PC-9 (cell line): ENCODE measurements at regions of chr12 and their contacts with region 1.

Region 1: GRCh38 chr12:104137913-104138796 is at the start of gene NFYB:
- DNase-seq: peak; percentile 92 to 93
- H3K4me3 ChIP-seq: peak within 1 kb of the TSS; percentile 78
- H3K27ac ChIP-seq: peak within 1 kb of the TSS; percentile 15; the same call in 1 of the 2 replicates
- H3K4me1 ChIP-seq: peaks cover 26% of the 10 kb centered on the region
- H3K27me3 ChIP-seq: no peaks in the 10 kb centered on the region
- CTCF ChIP-seq: no peak
- total RNA-seq, gene NFYB: 30.6 and 36.7 TPM in 2 replicates

Region 2: DNA sequence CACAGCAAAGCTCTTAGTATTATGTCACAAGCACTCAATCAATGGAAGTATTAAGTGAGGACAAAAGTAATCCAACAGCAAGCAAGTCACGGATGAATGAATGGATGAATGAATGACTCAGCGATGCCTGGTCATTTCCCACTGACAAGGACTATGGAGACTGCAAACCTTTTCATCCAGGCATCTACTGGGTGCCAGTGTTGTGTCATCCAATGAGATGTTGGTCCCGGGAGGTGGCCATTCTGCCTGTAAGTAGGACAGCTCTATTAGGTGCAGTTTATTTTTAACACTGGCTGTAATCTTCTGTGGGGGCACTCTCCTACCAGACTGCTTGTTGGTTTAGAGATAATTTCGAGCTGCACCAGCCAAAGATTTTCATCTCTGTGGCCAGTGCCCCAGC is 511.7 kb before region 1 on chr12:
- CTCF ChIA-PET with region 1: no interaction called
- POLR2A ChIA-PET with region 1: no interaction called
- intact Hi-C with region 1: no loop called
- DNase-seq: no peak
- H3K4me3 ChIP-seq: no peak overlapping the region
- H3K27ac ChIP-seq: no peak overlapping the region
- H3K4me1 ChIP-seq: no peaks in the 10 kb centered on the region
- H3K27me3 ChIP-seq: peaks cover 5% of the 10 kb centered on the region; the same call in 1 of the 2 replicates
- CTCF ChIP-seq: no peak

Region 3: DNA sequence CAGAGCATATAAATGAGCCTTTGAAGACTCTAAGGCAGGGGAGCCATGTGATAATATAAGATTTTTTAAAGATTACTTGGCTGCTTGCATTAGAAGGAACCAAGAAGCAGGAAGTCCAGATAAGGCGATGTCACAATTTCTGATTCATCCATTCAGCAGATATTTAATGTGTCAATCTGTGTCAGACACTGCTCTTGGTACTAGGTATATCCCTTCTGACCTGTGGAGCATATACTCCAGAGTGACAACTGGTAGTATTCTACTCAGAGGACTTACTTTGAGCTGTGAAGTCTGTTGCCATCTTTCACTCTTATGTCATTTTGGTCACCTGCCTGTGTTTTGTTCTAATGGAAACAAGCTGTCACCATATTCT is 176.1 kb after region 1 on chr12:
- CTCF ChIA-PET with region 1: no interaction called
- POLR2A ChIA-PET with region 1: no interaction called
- intact Hi-C with region 1: loop called (anchors 10 kb)
- DNase-seq: peak in 1 of 2 experiments; percentile 79
- H3K4me3 ChIP-seq: no peak overlapping the region
- H3K27ac ChIP-seq: peak overlapping the region; percentile 77
- H3K4me1 ChIP-seq: peaks cover 93% of the 10 kb centered on the region
- H3K27me3 ChIP-seq: no peaks in the 10 kb centered on the region
- CTCF ChIP-seq: no peak

Region 4: DNA sequence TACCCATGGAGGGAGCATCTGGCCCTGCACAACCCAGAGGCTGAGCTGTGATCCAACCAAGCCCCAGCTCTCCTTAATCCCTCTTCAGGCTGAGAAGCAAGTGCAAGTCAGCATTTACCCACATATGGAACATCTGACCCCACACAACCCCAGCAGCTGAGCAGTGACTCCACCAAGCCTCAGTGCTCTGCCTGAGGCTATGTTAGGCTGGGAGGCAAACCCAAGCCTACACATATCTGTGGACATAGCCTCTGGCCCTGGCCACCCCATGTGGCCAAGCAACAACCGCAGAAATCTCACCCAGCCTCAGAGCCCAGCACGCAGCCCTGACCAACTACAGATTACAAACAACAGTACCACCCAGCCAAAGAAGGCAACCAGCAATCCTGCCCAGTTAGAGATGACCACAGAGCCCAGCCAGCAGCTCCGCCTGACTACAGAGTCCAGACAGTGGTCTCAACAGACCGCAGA is 1857.8 kb after region 1 on chr12:
- CTCF ChIA-PET with region 1: no interaction called
- POLR2A ChIA-PET with region 1: interaction called, 13 read pairs
- intact Hi-C with region 1: no loop called
- DNase-seq: peak; percentile 21 to 64
- H3K4me3 ChIP-seq: no peak overlapping the region
- H3K27ac ChIP-seq: no peak overlapping the region
- H3K4me1 ChIP-seq: peaks cover 18% of the 10 kb centered on the region
- H3K27me3 ChIP-seq: no peaks in the 10 kb centered on the region
- CTCF ChIP-seq: no peak